Lower lobe of right lung (tissue), 2 donors: ENCODE measurements at regions of chrX and their contacts with region 1.

Region 1: GRCh38 chrX:65985922-65986588 is 53.8 kb downstream of the VSIG4 start:
- DNase-seq: no peak
- ATAC-seq: peak; percentile 80 to 93
- H3K4me3 ChIP-seq: no peak overlapping the region
- H3K27ac ChIP-seq: no peak overlapping the region
- H3K4me1 ChIP-seq: peaks cover 13% of the 10 kb centered on the region
- H3K27me3 ChIP-seq: no peaks in the 10 kb centered on the region
- CTCF ChIP-seq: peak; percentile 48

Region 2: DNA sequence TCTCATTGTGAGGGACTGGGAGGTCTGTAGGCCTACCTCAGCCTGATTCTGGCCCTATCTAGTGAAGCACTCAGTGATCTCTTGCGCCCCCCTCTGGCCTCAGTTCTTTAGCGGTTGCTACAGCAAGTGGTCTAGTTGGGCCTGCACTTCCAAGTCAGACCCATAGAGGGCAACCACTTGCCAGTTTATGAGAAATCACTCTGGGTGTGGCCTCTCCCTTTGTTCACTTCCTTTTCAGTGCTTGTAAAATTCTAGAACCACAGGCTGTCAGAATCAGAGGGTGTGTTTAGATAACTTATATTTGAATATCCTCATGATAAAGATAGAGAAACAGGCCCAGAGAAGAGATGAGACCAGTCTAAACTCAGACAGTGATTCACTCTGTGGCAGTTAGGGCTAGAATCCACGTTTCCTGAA is 390.6 kb before region 1 on chrX:
- intact Hi-C with region 1: loop called (anchors 10 kb)
- DNase-seq: peak; percentile 93
- ATAC-seq: peak; percentile 96 to 98
- H3K4me3 ChIP-seq: no peak overlapping the region
- H3K27ac ChIP-seq: peak overlapping the region; percentile 72
- H3K4me1 ChIP-seq: peaks cover 30% of the 10 kb centered on the region
- H3K27me3 ChIP-seq: no peaks in the 10 kb centered on the region
- CTCF ChIP-seq: peak; percentile 90

Region 3: GRCh38 chrX:65821721-65822496 is 164.1 kb before region 1 on chrX:
- intact Hi-C with region 1: no loop called
- DNase-seq: peak; percentile 60
- ATAC-seq: peak; percentile 80 to 81
- H3K4me3 ChIP-seq: peak overlapping the region; percentile 43
- H3K27ac ChIP-seq: no peak overlapping the region
- H3K4me1 ChIP-seq: no peaks in the 10 kb centered on the region
- H3K27me3 ChIP-seq: no peaks in the 10 kb centered on the region
- CTCF ChIP-seq: no peak

Region 4: DNA sequence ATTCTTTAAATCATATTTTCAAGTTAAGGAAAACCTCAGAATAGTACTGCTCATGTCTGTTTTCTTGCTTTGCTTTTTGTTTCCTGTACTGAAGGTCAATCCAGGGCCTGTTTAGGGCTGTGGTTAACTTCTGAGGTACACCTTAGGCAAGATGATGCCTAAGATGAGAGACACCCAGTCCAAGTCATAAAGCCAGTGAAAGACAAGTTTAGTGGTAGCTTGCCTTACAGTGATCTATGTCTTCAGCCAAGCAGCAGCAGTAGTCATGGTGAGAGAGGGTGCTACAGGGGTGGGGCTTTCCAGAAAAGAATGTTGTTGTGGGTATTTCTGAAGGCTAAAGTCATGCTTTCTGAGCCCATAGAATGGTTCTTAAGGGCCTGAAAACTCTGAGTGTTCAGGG is 119.9 kb before region 1 on chrX:
- intact Hi-C with region 1: no loop called
- DNase-seq: no peak
- ATAC-seq: no peak
- H3K4me3 ChIP-seq: no peak overlapping the region
- H3K27ac ChIP-seq: no peak overlapping the region
- H3K4me1 ChIP-seq: no peaks in the 10 kb centered on the region
- H3K27me3 ChIP-seq: no peaks in the 10 kb centered on the region
- CTCF ChIP-seq: no peak